OCI-LY7 (cell line): ENCODE measurements at regions of chr6 and their contacts with region 1.

Region 1: GRCh38 chr6:151451950-151452749 is at the start of gene RMND1:
- DNase-seq: peak; percentile 100
- H3K4me3 ChIP-seq: peak within 1 kb of the TSS; percentile 79
- H3K27ac ChIP-seq: peak within 1 kb of the TSS; percentile 70
- H3K4me1 ChIP-seq: peaks cover 24% of the 10 kb centered on the region
- CTCF ChIP-seq: no peak
- total RNA-seq, gene RMND1: 10.2 and 21.2 TPM in 2 replicates

Region 2: GRCh38 chr6:151434369-151434768 is 17.8 kb before region 1 on chr6:
- CTCF ChIA-PET with region 1: no interaction called
- POLR2A ChIA-PET with region 1: interaction called, 10 read pairs
- intact Hi-C with region 1: no loop called
- DNase-seq: peak; percentile 50
- H3K4me3 ChIP-seq: no peak overlapping the region
- H3K27ac ChIP-seq: no peak overlapping the region
- H3K4me1 ChIP-seq: peaks cover 6% of the 10 kb centered on the region
- CTCF ChIP-seq: no peak

Region 3: GRCh38 chr6:151475653-151476523 is 23.7 kb after region 1 on chr6:
- CTCF ChIA-PET with region 1: no interaction called
- POLR2A ChIA-PET with region 1: interaction called, 6 read pairs
- intact Hi-C with region 1: loop called (anchors 2 kb)
- DNase-seq: peak; percentile 68
- H3K4me3 ChIP-seq: no peak overlapping the region
- H3K27ac ChIP-seq: no peak overlapping the region
- H3K4me1 ChIP-seq: peaks cover 15% of the 10 kb centered on the region
- CTCF ChIP-seq: peak; percentile 96

Region 4: GRCh38 chr6:151993364-151993763 is 541.2 kb after region 1 on chr6:
- CTCF ChIA-PET with region 1: no interaction called
- POLR2A ChIA-PET with region 1: no interaction called
- intact Hi-C with region 1: no loop called
- DNase-seq: no peak
- H3K4me3 ChIP-seq: no peak overlapping the region
- H3K27ac ChIP-seq: no peak overlapping the region
- H3K4me1 ChIP-seq: no peaks in the 10 kb centered on the region
- CTCF ChIP-seq: no peak

Region 5: DNA sequence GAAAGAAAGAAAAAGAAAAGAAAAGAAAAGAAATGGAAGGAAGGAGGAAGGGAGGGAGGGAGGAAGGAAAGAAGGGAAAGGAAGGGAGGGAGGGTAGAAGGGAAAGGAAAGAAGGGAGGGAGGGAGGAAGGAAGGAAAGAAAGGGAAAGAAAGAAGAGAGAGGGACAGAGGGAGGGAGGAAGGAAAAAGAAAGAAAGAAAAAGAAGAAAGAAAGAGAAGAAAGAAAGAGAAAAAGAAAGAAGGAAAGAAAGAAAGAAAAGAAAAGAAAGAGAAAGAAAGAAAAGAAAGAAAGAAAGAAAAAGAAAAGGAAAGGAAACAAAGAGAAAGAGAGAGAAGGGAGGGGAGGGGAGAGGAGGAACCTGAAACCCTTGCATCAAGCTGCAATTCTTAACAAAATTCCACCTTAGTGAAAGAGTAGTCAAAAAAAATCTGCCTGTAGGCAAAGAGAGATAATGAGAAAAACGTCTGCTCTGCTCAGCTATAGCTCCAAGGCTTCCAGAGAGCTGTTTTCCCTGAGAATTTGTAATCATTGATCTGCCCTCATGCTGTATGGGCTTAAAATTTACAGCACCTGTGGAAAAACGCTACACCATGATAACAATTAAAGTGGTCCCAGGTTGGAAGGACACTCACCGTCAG is 1228.8 kb after region 1 on chr6:
- CTCF ChIA-PET with region 1: no interaction called
- POLR2A ChIA-PET with region 1: no interaction called
- intact Hi-C with region 1: loop called (anchors 10 kb)
- DNase-seq: no peak
- H3K4me3 ChIP-seq: peak overlapping the region; percentile 70
- H3K27ac ChIP-seq: peak overlapping the region; percentile 96
- H3K4me1 ChIP-seq: peaks cover 66% of the 10 kb centered on the region
- CTCF ChIP-seq: no peak